ENCODE measurements at regions of chr5 and their contacts with region 1.

Region 1: GRCh38 chr5:54217826-54218503 is 92.4 kb downstream of the ARL15 start:
- DNase-seq: peak; percentile 82
- ATAC-seq: peak; percentile 84
- H3K4me3 ChIP-seq: no peak overlapping the region
- H3K27ac ChIP-seq: no peak overlapping the region
- H3K4me1 ChIP-seq: peaks cover 4% of the 10 kb centered on the region; the same call in 1 of the 2 replicates
- H3K27me3 ChIP-seq: no peaks in the 10 kb centered on the region
- CTCF ChIP-seq: peak; percentile 89
- POLR2A ChIP-seq: no peak
- RAD21 ChIP-seq: peak; percentile 92

Region 2: GRCh38 chr5:52961274-52961681 is 1256.7 kb before region 1 on chr5:
- CTCF ChIA-PET with region 1: no interaction called
- POLR2A ChIA-PET with region 1: no interaction called
- dilution Hi-C with region 1: no loop called
- in situ Hi-C with region 1: loop called (anchors 25 kb)
- intact Hi-C with region 1: no loop called
- DNase-seq: no peak
- ATAC-seq: no peak
- H3K4me3 ChIP-seq: no peak overlapping the region
- H3K27ac ChIP-seq: no peak overlapping the region
- H3K4me1 ChIP-seq: peaks cover 3% of the 10 kb centered on the region; the same call in 1 of the 2 replicates
- H3K27me3 ChIP-seq: no peaks in the 10 kb centered on the region
- CTCF ChIP-seq: no peak
- POLR2A ChIP-seq: no peak
- RAD21 ChIP-seq: no peak

Region 3: DNA sequence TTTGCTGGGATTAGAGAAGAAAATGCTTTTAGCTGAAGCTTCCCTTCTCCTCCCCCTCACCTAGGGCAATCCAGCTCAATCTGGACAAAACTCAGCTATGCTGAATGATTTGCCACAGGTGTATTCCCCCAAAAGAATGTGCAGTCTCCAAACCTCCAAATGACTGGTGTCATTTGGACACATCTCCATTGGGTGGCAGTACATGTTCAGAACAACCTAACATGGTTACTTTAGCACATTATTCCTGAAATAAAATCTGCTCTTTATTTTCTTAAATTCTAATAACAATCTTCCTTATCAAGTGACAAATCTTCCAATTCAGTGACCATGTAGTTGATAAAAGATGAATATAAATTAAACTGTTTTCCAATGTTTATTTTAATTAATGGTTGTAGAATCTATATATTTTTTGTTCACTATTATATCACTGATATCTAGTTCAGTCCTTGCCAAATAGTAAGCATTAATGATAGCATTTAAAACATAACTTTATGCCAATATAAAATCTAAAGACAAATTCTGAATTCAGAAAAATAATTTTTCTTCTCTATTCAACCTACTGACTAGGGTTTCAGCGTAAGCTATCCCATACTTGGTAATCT is 1047.1 kb before region 1 on chr5:
- CTCF ChIA-PET with region 1: no interaction called
- POLR2A ChIA-PET with region 1: no interaction called
- dilution Hi-C with region 1: no loop called
- in situ Hi-C with region 1: no loop called
- intact Hi-C with region 1: loop called (anchors 2 kb)
- DNase-seq: peak; percentile 63
- ATAC-seq: peak; percentile 90
- H3K4me3 ChIP-seq: no peak overlapping the region
- H3K27ac ChIP-seq: no peak overlapping the region
- H3K4me1 ChIP-seq: peaks cover 4% of the 10 kb centered on the region
- H3K27me3 ChIP-seq: no peaks in the 10 kb centered on the region
- CTCF ChIP-seq: peak; percentile 73
- POLR2A ChIP-seq: no peak
- RAD21 ChIP-seq: peak; percentile 93

Region 4: DNA sequence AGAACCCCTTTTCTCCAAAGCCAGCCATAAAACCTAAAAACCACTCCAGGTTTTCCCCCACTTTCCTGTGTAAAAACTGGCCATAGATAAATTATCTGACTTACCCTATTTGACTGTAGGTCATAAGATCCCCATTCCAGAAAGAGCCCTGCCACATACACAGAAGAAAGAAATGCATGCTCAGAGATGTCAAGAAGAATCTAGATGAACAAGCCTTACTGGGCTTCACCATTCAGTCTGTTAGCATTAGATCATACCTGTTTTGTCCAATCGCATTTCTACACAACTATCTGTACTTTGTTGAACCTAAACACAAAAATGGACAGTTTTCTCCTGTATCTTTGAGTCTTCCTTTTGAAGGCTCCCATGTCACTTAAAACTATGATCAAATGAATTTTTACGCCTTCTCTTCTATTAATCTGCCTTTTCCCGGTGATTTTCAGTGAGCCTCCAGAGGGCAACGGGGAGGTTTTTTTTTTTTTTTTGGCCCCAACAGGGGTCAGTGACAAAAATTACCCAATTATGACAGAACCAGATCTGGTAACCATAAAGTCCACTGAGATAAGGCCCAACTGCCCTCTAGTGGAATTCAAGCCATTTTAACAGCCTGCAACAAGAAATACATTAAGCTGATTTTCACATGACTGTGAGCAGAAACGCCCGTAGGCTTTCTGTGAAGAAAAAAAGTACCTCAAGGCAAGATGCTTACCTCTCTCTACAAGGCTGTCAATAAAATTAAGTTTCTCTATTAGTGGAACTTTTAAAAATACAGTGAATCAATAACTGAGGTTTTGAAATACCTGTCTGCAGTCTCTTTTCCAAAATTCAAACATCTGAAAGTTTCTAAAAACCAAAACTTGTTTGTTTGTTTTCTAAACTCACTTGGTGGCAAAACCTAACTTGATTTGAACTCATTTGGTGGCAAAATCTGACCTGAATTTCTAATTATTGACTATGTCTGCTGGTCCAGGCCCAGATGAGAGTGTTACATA is 787.4 kb before region 1 on chr5:
- CTCF ChIA-PET with region 1: no interaction called
- POLR2A ChIA-PET with region 1: no interaction called
- dilution Hi-C with region 1: no loop called
- in situ Hi-C with region 1: no loop called
- intact Hi-C with region 1: loop called (anchors 2 kb)
- DNase-seq: peak; percentile 87
- ATAC-seq: peak; percentile 67
- H3K4me3 ChIP-seq: no peak overlapping the region
- H3K27ac ChIP-seq: peak overlapping the region; percentile 80
- H3K4me1 ChIP-seq: peaks cover 14% of the 10 kb centered on the region
- H3K27me3 ChIP-seq: no peaks in the 10 kb centered on the region
- CTCF ChIP-seq: peak; percentile 82
- POLR2A ChIP-seq: peak; percentile 48; the same call in 1 of the 2 replicates
- RAD21 ChIP-seq: peak; percentile 88

Region 5: DNA sequence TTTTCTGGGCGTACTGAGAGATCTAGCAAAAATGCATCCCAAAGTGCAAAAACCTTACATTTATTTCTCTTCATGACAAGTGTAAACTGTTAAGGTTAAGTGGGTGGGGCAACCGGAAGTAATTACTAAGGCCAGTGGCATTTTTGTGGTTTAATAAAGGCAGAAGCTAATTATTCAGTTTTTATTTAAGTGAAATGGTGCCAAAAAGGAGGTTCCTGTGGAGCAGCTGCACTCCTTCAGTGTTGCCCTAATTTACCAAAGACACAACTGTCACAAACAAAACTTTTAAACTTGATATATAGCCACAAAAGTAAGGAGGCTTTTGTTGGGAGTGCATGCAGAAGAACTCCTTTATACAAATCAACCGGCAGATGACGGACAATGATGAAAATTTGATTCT is 575.9 kb before region 1 on chr5:
- CTCF ChIA-PET with region 1: no interaction called
- POLR2A ChIA-PET with region 1: no interaction called
- dilution Hi-C with region 1: no loop called
- in situ Hi-C with region 1: no loop called
- intact Hi-C with region 1: loop called (anchors 10 kb)
- DNase-seq: peak; percentile 17
- ATAC-seq: no peak; the same call in 1 of the 2 replicates
- H3K4me3 ChIP-seq: no peak overlapping the region
- H3K27ac ChIP-seq: no peak overlapping the region
- H3K4me1 ChIP-seq: peaks cover 9% of the 10 kb centered on the region
- H3K27me3 ChIP-seq: no peaks in the 10 kb centered on the region
- CTCF ChIP-seq: no peak
- POLR2A ChIP-seq: no peak
- RAD21 ChIP-seq: no peak

Region 6: DNA sequence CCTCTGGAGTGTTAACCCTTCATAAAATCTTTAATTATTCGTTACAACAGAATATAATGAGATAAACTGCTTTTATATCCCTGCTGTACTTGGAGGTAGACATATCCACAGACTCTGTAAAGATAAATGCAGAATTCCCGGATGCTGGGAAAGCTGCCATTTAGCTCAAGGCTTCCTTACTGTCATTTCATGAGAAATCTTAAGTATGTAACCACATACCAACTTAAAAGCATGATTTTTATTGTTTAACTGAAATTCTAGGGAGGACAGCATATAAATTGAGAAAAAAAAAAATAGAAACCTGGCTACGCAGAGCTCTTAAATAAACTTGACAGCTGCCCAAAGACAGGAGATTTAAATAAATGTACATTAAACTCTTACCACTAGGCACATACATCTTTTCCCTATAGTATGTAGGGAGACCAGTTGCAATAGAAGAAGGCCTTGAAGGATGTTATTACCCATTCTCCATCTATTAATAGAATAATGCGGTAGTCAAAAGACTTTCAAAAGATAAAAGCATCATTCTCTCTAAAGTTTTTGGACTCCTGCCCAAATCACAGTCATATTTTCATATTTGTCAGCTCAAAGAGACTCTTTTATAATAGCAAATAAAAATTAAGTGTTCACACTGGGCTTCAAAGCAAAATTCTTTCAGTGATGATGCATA is 283.7 kb before region 1 on chr5:
- CTCF ChIA-PET with region 1: no interaction called
- POLR2A ChIA-PET with region 1: no interaction called
- dilution Hi-C with region 1: no loop called
- in situ Hi-C with region 1: no loop called
- intact Hi-C with region 1: loop called (anchors 5 kb)
- DNase-seq: peak; percentile 75
- ATAC-seq: peak; percentile 72
- H3K4me3 ChIP-seq: no peak overlapping the region
- H3K27ac ChIP-seq: no peak overlapping the region
- H3K4me1 ChIP-seq: peaks cover 5% of the 10 kb centered on the region
- H3K27me3 ChIP-seq: no peaks in the 10 kb centered on the region
- CTCF ChIP-seq: no peak
- POLR2A ChIP-seq: no peak
- RAD21 ChIP-seq: no peak

Region 7: DNA sequence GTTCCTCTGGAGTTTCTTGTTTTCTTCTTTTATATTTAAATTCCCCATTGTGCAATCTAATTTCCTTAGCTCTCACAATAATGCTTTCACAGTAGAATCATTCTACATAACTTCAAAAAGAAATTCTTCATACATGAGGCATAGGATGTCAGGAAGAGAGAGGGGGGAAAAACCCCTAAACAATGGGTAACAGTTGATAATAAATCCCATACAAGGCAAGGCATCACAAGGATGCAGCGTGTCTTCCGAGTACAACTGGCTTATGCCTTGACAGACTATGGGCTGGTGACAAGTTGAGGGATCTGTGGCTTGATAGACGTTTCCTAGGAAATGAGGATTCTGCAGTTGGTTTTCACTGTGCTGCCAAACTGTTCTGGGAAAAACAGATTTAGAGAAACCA is 155.0 kb before region 1 on chr5:
- CTCF ChIA-PET with region 1: no interaction called
- POLR2A ChIA-PET with region 1: no interaction called
- dilution Hi-C with region 1: no loop called
- in situ Hi-C with region 1: no loop called
- intact Hi-C with region 1: no loop called
- DNase-seq: peak; percentile 78
- ATAC-seq: peak; percentile 54
- H3K4me3 ChIP-seq: no peak overlapping the region
- H3K27ac ChIP-seq: peak overlapping the region; percentile 78
- H3K4me1 ChIP-seq: peaks cover 9% of the 10 kb centered on the region
- H3K27me3 ChIP-seq: no peaks in the 10 kb centered on the region
- CTCF ChIP-seq: no peak
- POLR2A ChIP-seq: no peak
- RAD21 ChIP-seq: no peak

Region 8: DNA sequence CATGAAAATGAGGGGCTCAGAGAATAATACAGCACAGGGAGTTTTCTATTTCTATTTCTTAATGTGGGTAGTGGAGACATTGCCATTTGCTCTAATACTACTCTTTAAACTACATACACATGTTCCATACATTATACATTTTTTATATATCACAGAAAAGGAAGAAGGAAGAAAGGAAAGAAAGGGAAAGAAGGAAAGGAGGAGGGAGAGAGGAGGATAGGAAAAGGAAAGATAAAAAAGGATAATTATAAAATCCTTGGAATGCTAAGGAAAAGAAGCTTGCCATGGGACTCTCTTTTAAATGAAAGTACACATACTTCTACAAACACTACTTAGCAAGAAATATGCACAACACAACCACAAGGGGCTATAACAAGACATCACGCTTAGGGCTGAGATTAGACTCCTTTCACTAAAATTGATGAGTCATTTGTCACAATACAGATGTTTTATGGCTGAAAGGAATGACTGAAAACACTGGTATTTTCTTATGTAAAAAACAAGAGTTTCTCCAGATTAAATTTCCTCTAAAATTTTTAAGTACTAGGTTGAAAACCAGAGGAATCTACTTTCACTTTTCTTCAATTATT is 127.4 kb before region 1 on chr5:
- CTCF ChIA-PET with region 1: interaction called, 3 read pairs
- POLR2A ChIA-PET with region 1: no interaction called
- dilution Hi-C with region 1: no loop called
- in situ Hi-C with region 1: no loop called
- intact Hi-C with region 1: loop called (anchors 2 kb)
- DNase-seq: peak; percentile 85
- ATAC-seq: peak; percentile 66
- H3K4me3 ChIP-seq: 0 out of 2 replicates have a peak overlapping the region, but pooled peaks have one; percentile 1
- H3K27ac ChIP-seq: no peak overlapping the region
- H3K4me1 ChIP-seq: peaks cover 14% of the 10 kb centered on the region
- H3K27me3 ChIP-seq: no peaks in the 10 kb centered on the region
- CTCF ChIP-seq: peak; percentile 41
- POLR2A ChIP-seq: no peak
- RAD21 ChIP-seq: peak; percentile 28

Region 9: GRCh38 chr5:54243473-54244080 is 25.6 kb after region 1 on chr5:
- CTCF ChIA-PET with region 1: no interaction called
- POLR2A ChIA-PET with region 1: no interaction called
- dilution Hi-C with region 1: no loop called
- in situ Hi-C with region 1: no loop called
- intact Hi-C with region 1: no loop called
- DNase-seq: peak; percentile 47
- ATAC-seq: peak; percentile 76
- H3K4me3 ChIP-seq: no peak overlapping the region
- H3K27ac ChIP-seq: no peak overlapping the region
- H3K4me1 ChIP-seq: no peaks in the 10 kb centered on the region
- H3K27me3 ChIP-seq: no peaks in the 10 kb centered on the region
- CTCF ChIP-seq: peak; percentile 83
- POLR2A ChIP-seq: no peak
- RAD21 ChIP-seq: peak; percentile 86

Measured in IMR-90 (cell line).